ENCODE measurements at regions of chr7 and their contacts with region 1.

Region 1: DNA sequence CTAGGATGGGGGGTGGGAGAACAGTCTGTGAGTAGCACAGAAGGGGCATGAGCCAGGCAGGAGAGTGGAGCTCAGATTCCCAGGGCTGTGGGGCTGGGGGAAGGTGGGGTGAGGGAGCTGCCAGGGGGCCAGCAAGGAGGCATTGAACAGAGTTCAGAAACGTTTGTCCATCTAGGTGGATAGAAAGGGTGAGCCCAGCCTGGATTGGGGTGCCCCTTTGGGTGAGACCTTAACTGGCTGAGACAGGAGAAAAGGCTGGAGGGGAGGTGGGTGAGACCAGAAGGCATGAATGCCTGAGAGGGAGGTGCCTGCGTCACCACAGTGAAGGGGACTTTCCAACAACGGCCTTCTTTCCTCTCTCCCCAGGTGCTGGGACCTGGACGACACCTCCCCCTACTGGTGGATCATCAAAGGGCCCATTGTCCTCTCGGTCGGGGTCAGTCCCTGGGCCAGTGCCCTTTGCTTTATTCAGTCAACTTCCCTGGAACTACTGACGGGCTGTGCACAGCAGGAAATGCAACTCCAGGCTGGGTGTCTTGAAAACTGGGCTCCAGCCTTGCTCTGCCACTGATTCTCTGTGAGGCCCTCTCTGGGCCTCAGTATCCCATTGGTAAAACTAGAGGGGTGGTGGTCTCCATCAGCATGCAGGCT is 11.0 kb downstream of the GHRHR start:
- DNase-seq: peak; percentile 36 to 87
- H3K4me3 ChIP-seq: no peak overlapping the region
- H3K27ac ChIP-seq: no peak overlapping the region
- H3K4me1 ChIP-seq: peaks cover 0 to 7% (median 4%) of the 10 kb centered on the region in 4 experiments; a peak in 4 of 7 replicates
- H3K27me3 ChIP-seq: no peaks in the 10 kb centered on the region; a peak in 2 of 7 replicates
- CTCF ChIP-seq: peak; percentile 91 to 94 (median 91)
- EP300 ChIP-seq: peak in 1 of 2 experiments; percentile 68; a peak in 1 of 3 replicates
- POLR2A ChIP-seq: no peak
- RAD21 ChIP-seq: peak; percentile 85 to 87

Region 2: GRCh38 chr7:30708976-30709375 is 265.8 kb before region 1 on chr7:
- CTCF ChIA-PET with region 1: no interaction called
- POLR2A ChIA-PET with region 1: no interaction called
- DNase-seq: no peak
- H3K4me3 ChIP-seq: no peak overlapping the region
- H3K27ac ChIP-seq: no peak overlapping the region; the same call in 1 of the 2 replicates
- H3K4me1 ChIP-seq: no peaks in the 10 kb centered on the region; a peak in 2 of 7 replicates
- H3K27me3 ChIP-seq: no peaks in the 10 kb centered on the region
- CTCF ChIP-seq: no peak
- EP300 ChIP-seq: no peak
- POLR2A ChIP-seq: no peak
- RAD21 ChIP-seq: no peak

Region 3: DNA sequence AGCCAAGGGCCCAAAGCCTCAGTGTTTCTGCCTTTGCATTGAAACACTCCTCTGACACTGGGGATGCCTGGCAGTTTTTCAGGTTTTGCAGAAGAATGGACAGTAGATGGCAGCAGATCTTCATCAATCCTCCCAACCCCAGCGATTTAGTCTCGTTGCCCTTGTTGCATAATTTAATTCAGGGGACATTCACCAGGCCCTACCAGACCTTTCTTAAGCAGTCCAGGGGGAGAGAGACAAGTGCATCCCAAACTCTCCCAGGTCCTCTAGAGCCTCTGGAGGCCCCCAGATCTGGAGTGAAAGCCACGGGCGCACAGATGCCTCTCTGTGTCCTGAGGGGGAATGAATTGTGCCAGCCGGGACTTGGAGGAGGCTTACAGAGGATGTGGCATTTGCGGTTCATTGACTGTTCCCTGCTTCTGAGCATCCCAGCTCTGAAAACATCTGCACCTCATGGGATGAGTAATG is 173.9 kb before region 1 on chr7:
- CTCF ChIA-PET with region 1: interaction called, 15 read pairs
- POLR2A ChIA-PET with region 1: no interaction called
- DNase-seq: peak; percentile 21 to 66
- H3K4me3 ChIP-seq: no peak overlapping the region
- H3K27ac ChIP-seq: no peak overlapping the region
- H3K4me1 ChIP-seq: no peaks in the 10 kb centered on the region
- H3K27me3 ChIP-seq: no peaks in the 10 kb centered on the region
- CTCF ChIP-seq: peak; percentile 31 to 88 (median 77)
- EP300 ChIP-seq: no peak
- POLR2A ChIP-seq: no peak
- RAD21 ChIP-seq: peak; percentile 98 to 99

Region 4: DNA sequence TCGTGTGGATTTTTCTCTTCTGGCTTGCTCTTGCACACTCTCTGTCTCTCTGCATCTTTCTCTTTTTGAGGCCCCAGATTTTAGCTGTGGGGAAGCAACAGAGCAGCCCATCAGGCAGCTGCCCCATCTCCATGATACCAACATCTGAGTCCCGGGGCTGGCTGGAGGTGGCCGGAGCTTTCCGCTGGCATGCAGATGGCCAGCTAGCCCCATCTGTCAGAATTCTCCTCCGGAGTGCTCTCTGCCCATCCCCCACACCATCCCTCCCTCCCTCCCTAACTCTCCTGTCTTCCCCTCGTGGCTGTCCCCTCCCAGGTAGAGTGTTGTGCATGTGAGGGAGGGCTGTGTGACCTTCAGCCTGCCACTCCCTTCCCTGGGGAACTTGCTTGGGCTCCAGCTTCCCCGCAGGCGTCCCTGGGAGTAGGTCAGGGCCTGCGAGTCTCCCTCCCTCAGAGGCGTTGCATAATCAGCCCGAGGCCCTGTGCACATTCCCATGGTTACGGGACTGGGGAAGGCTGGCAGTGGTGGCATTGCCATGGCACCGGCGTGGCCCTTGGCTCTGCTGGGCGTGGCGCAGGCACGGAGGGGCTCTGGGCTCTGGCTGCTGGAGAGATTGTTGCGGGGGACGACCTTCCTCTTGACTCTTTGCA is 13.7 kb after region 1 on chr7:
- CTCF ChIA-PET with region 1: interaction called, 65 read pairs
- POLR2A ChIA-PET with region 1: no interaction called
- DNase-seq: peak in 1 of 2 experiments; percentile 66
- H3K4me3 ChIP-seq: no peak overlapping the region
- H3K27ac ChIP-seq: no peak overlapping the region
- H3K4me1 ChIP-seq: peaks cover 13 to 49% (median 39%) of the 10 kb centered on the region in 4 experiments
- H3K27me3 ChIP-seq: peaks cover 0 to 7% (median 2%) of the 10 kb centered on the region in 4 experiments; a peak in 3 of 7 replicates
- CTCF ChIP-seq: no peak
- EP300 ChIP-seq: no peak
- POLR2A ChIP-seq: no peak
- RAD21 ChIP-seq: no peak

Region 5: DNA sequence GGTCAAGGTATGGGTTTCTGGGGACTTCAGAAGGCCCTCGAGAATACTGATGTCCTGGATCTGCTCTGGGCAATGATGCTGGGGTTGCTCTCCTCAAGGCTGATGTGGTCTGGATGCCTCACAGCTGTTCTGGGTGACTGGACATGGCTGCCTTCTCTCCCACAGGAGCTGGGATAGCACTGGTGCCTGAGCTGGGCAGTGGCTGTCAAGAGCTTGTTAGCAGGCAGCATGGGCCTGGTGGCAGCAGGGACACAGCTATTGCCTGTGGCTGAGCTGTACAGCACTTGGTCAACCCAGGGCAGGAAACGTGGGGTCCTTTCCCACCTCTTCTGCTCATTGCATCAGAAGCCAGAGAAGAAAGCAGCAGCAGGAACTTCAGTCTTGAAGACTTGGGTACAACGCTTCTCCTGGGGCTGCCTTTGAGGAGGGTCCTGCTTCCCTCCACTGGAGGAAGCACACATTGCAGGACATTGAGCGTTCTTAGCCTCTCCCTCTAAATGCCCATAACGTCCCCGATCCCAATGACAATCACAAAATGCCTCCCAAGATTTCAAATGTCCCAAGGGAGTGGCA is 90.4 kb after region 1 on chr7:
- CTCF ChIA-PET with region 1: interaction called, 13 read pairs
- POLR2A ChIA-PET with region 1: no interaction called
- DNase-seq: no peak
- H3K4me3 ChIP-seq: no peak overlapping the region
- H3K27ac ChIP-seq: no peak overlapping the region
- H3K4me1 ChIP-seq: peaks cover 0 to 3% (median 2%) of the 10 kb centered on the region in 4 experiments; a peak in 2 of 7 replicates
- H3K27me3 ChIP-seq: no peaks in the 10 kb centered on the region
- CTCF ChIP-seq: peak; percentile 28 to 50 (median 34)
- EP300 ChIP-seq: no peak
- POLR2A ChIP-seq: no peak
- RAD21 ChIP-seq: peak; percentile 61 to 71

Region 6: GRCh38 chr7:31134246-31135188 is 159.8 kb after region 1 on chr7:
- CTCF ChIA-PET with region 1: interaction called, 517 read pairs
- POLR2A ChIA-PET with region 1: no interaction called
- DNase-seq: peak; percentile 56 to 84
- H3K4me3 ChIP-seq: peak overlapping the region in 1 of 4 experiments; percentile 26; a peak in 1 of 8 replicates
- H3K27ac ChIP-seq: no peak overlapping the region
- H3K4me1 ChIP-seq: no peaks in the 10 kb centered on the region; a peak in 1 of 7 replicates
- H3K27me3 ChIP-seq: no peaks in the 10 kb centered on the region
- CTCF ChIP-seq: peak; percentile 50 to 83 (median 82)
- EP300 ChIP-seq: no peak
- POLR2A ChIP-seq: no peak
- RAD21 ChIP-seq: peak; percentile 87 to 93